ENCODE measurements at regions of chr12 and their contacts with region 1.

Region 1: DNA sequence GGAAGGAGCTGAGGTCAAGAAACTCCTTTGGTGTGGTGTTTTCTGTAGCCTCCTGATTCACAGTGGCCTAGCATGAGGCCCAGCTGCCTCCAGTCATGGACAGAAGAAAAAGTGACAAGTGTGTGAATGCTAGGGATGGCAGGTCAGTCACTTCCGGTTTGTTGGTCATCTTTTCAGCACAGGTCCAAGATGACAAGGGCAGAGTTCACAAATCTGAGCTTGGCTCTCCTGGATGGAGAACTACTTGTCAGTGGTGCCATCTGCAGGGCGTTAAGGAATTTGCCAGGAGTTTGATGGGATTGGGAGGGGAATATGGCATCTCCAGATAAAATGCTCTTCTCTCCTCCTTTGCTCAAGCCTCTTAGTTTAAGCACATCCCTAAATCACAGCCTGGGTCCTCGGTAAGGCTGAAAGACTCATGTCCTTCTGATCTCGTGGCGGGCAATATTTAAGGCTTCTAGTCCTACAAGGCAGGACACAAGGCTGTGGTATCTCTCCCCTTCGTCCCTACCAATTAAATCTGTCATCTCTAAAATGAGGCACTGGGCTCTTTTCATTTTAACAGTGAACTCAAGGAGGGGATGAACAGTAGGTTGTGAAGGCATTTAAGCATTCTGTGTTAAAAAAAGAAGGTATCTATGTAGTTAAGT is 10.0 kb downstream of the TUBA1B start:
- DNase-seq: no peak
- ATAC-seq: no peak
- H3K4me3 Mint-ChIP-seq: no peak overlapping the region
- H3K27ac Mint-ChIP-seq: no peak overlapping the region
- H3K4me1 Mint-ChIP-seq: no peaks in the 10 kb centered on the region
- H3K27me3 Mint-ChIP-seq: no peaks in the 10 kb centered on the region
- CTCF ChIP-seq: no peak

Region 2: GRCh38 chr12:49828133-49829091 is 707.2 kb after region 1 on chr12 and contains the start of gene NCKAP5L:
- CTCF ChIA-PET with region 1: no interaction called
- POLR2A ChIA-PET with region 1: interaction called, 13 read pairs
- intact Hi-C with region 1: no loop called
- DNase-seq: peak; percentile 87
- ATAC-seq: peak; percentile 97
- H3K4me3 Mint-ChIP-seq: peak within 1 kb of the TSS; percentile 98
- H3K27ac Mint-ChIP-seq: peak within 1 kb of the TSS; percentile 95
- H3K4me1 Mint-ChIP-seq: peaks cover 37% of the 10 kb centered on the region
- H3K27me3 Mint-ChIP-seq: no peaks in the 10 kb centered on the region
- CTCF ChIP-seq: no peak
- total RNA-seq, gene NCKAP5L: 7.2 and 9.1 TPM in 2 replicates